Heart left ventricle (tissue), 16 donors: ENCODE measurements at regions of chr1 and their contacts with region 1.

Region 1: DNA sequence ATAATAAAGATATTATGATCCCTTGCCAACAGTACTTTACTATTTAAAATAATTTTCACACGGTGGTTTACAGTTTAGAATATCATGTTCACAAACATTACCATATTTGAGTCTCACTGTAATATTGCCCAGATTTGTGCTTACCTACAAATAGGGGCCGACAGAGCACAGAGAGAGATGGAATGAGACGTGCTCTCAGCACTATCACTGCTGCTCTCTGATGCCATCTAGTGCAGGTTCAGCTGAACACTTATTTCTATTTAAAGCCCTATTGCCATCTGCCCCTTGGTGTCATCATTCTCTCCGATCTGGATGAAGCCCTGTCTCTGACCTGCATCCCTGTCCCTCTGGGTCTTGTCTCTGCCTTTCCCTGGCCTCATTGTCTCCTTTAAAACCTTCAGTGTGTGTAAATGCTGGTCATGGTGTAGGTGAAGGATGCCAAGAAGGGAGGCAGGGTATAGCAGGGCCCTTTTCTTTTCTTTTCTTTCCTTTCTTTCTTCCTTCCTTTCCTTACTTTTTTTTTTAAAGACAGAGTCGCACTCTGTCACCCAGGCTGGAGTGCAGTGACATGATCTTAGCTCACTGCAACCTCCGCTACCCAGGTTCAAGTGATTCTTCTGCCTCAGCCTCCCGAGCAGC is 6.9 kb upstream of the GPATCH4 start:
- DNase-seq: peak in 4 of 5 donors; percentile 41 to 63 (median 60)
- ATAC-seq: peak; percentile 89 to 94 (median 91)
- H3K4me3 ChIP-seq: no peak overlapping the region
- H3K27ac ChIP-seq: no peak overlapping the region
- H3K4me1 ChIP-seq: peaks cover 0 to 8% (median 4%) of the 10 kb centered on the region in 12 donors
- H3K27me3 ChIP-seq: no peaks in the 10 kb centered on the region
- CTCF ChIP-seq: peak; percentile 55 to 84 (median 76)
- POLR2A ChIP-seq: no peak

Region 2: GRCh38 chr1:156451505-156452160 is 156.5 kb before region 1 on chr1:
- intact Hi-C with region 1: loop called (anchors 1 to 5 kb)
- DNase-seq: no peak
- ATAC-seq: no peak
- H3K4me3 ChIP-seq: no peak overlapping the region
- H3K27ac ChIP-seq: no peak overlapping the region
- H3K4me1 ChIP-seq: peaks cover 0 to 17% (median 0%) of the 10 kb centered on the region in 12 donors
- H3K27me3 ChIP-seq: peaks cover 0 to 12% (median 0%) of the 10 kb centered on the region in 9 donors
- CTCF ChIP-seq: no peak
- POLR2A ChIP-seq: no peak

Region 3: DNA sequence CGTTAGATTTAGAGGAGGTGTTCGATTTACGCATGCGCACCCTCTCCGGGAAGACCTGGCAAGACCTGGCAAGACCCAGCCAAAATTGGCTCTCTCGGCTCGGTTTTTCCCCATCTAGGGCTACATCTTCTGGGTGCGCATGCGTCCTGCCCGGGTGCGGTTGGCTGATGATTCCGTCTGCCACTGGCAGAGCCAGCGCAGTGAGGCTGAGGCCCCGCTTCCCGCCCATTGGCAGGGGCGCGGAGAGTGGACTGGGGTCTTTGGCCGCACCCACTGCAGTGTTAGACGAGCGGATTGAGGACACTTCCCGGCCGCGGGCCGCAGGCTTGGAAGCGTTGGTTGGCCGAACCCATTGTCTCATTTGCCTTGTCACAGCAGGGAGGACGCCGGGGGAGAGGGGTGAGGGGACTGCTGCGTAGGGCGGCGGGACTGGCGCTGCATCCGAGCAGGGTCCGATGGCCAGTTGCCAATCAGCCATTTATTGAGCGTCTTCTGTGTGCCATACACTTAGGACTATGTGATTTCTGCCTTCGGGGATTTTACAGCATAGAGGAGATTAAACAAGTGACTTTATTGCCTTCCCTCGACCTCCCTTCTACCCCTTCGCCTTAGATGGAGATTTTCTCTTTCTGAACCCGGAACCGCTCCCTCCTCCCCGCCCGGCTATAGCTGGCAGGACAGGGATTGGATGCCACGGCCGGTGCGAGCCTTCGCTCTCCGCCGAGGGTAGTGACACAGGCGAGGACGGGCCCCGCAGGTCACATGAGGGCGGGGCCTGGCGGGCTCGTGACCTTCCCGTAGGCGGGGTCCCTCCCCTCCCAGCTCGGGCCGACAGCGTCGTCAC is 151.3 kb before region 1 on chr1:
- intact Hi-C with region 1: loop called (anchors 1 to 5 kb)
- DNase-seq: peak; percentile 97 to 99 (median 98)
- ATAC-seq: peak; percentile 94 to 96 (median 95)
- H3K4me3 ChIP-seq: peak overlapping the region; percentile 42 to 73 (median 62)
- H3K27ac ChIP-seq: peak overlapping the region; percentile 98 to 100 (median 98)
- H3K4me1 ChIP-seq: peaks cover 0 to 30% (median 6%) of the 10 kb centered on the region in 12 donors
- H3K27me3 ChIP-seq: no peaks in the 10 kb centered on the region
- CTCF ChIP-seq: no peak
- POLR2A ChIP-seq: peak; percentile 35 to 71

Region 4: DNA sequence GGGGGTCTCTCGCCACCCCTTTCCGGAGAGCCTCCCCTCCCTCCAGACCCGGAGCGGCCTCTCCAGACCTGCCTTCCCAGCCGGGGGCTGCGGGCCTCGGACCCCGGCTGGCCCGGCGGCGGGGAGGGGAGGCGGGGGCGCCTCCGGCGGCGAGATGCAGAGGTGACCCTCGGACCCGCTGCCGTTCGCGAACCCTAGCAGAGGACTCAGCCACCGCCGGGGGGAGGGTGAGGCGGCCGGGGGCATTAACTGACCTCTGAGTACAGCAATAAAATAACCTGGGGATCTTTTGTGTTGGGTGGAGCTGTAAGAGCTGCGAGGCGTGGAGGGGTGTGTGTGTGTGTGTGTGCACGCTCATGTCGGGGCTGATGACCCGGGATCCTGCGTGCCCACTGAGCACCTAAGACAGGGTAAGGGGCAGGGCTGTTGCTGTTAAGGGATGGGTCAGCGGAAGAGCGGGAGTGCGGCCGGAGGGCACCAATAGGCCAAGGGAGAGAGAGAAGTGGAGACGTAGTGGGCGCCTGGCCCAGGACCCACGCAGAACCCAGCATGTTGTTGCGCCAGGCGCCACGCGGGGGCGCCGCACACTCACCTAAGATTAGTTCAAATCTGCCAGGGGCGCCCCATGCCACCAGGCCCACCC is 17.4 kb after region 1 on chr1:
- intact Hi-C with region 1: no loop called
- DNase-seq: peak in 4 of 5 donors; percentile 46 to 81 (median 64)
- ATAC-seq: peak; percentile 40 to 67 (median 48)
- H3K4me3 ChIP-seq: peak overlapping the region; percentile 26 to 59 (median 50)
- H3K27ac ChIP-seq: peak overlapping the region in 9 of 12 donors; percentile 14 to 81 (median 67)
- H3K4me1 ChIP-seq: peaks cover 5 to 36% (median 22%) of the 10 kb centered on the region in 12 donors
- H3K27me3 ChIP-seq: peaks cover 3 to 67% (median 50%) of the 10 kb centered on the region in 9 donors
- CTCF ChIP-seq: peak; percentile 62 to 85 (median 80)
- POLR2A ChIP-seq: no peak

Region 5: DNA sequence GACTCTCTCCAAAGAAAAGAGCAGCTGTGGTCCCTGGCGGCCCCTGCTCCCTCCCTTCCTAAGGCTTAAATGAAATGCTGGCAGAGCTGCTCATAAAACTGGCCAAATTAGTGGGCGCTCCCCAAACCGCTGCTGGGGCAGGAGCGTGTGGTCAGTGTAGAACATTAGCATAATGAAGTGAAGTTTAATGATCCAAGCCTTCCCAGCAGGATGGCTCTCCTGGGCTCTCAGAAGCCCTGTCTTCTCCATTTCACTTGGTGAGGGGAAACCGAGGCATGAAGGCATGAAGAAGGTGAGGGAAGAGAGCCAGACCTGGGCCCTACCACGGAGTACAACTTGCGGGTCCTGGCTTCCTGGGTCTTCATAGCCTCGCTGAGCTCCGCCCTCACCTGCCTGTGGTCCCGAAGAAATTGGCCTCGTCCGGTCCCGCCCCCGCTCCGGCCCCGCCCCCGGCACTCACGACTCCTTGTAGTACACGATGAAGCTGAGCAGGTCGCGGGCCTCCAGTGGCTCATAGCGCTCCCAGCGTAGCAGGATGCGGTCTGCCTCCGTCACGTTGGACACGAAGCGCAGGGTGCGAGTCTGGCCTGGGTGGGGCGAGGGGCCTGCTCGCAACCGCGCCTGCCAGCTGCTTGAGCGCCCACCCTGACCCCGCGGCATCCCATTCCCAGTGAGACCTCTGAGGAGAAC is 240.5 kb after region 1 on chr1:
- intact Hi-C with region 1: no loop called
- DNase-seq: no peak
- ATAC-seq: no peak
- H3K4me3 ChIP-seq: no peak overlapping the region
- H3K27ac ChIP-seq: no peak overlapping the region
- H3K4me1 ChIP-seq: peaks cover 0 to 24% (median 8%) of the 10 kb centered on the region in 12 donors
- H3K27me3 ChIP-seq: peaks cover 6 to 59% (median 31%) of the 10 kb centered on the region in 9 donors
- CTCF ChIP-seq: no peak
- POLR2A ChIP-seq: no peak